ENCODE measurements at regions of chr3 and their contacts with region 1.

Region 1: GRCh38 chr3:134308350-134308891 is 57.8 kb upstream of the RYK start:
- DNase-seq: peak in 1 of 2 experiments; percentile 95
- H3K4me3 ChIP-seq: no peak overlapping the region
- H3K27ac ChIP-seq: peak overlapping the region; percentile 70; the same call in 1 of the 2 replicates
- H3K4me1 ChIP-seq: peaks cover 5 to 16% (median 8%) of the 10 kb centered on the region in 4 experiments
- H3K27me3 ChIP-seq: peaks cover 0 to 16% (median 9%) of the 10 kb centered on the region in 4 experiments; a peak in 5 of 7 replicates
- CTCF ChIP-seq: peak; percentile 86 to 99 (median 97)
- EP300 ChIP-seq: no peak
- POLR2A ChIP-seq: no peak
- RAD21 ChIP-seq: peak; percentile 99 to 100

Region 2: DNA sequence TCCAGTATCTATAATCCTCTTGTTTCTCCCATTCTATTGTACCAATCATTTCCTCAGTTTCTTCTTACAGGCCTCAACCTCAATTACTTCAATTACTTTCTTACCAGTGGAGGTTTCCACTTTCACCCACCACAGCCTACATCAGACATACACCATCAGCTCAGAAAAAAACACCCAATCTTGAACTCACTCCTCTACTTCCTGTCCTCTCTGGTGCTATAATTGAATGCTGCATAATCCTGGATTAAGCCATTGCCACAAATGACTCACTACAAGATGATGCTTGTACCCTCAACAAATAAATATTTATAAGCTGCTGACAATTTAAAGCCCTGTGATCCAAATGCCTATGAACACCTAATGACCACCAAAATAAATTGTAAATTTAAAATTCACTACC is 76.3 kb before region 1 on chr3:
- CTCF ChIA-PET with region 1: no interaction called
- POLR2A ChIA-PET with region 1: no interaction called
- DNase-seq: no peak
- H3K4me3 ChIP-seq: no peak overlapping the region
- H3K27ac ChIP-seq: no peak overlapping the region
- H3K4me1 ChIP-seq: peaks cover 0 to 3% (median 0%) of the 10 kb centered on the region in 4 experiments; a peak in 1 of 7 replicates
- H3K27me3 ChIP-seq: no peaks in the 10 kb centered on the region
- CTCF ChIP-seq: no peak
- EP300 ChIP-seq: no peak
- POLR2A ChIP-seq: no peak
- RAD21 ChIP-seq: no peak

Region 3: GRCh38 chr3:134326760-134327593 is 18.6 kb after region 1 on chr3:
- CTCF ChIA-PET with region 1: interaction called, 31 read pairs
- POLR2A ChIA-PET with region 1: interaction called, 100 read pairs
- DNase-seq: no peak
- H3K4me3 ChIP-seq: no peak overlapping the region; a peak in 1 of 8 replicates
- H3K27ac ChIP-seq: peak overlapping the region; percentile 62; the same call in 1 of the 2 replicates
- H3K4me1 ChIP-seq: peaks cover 9 to 29% (median 21%) of the 10 kb centered on the region in 4 experiments
- H3K27me3 ChIP-seq: no peaks in the 10 kb centered on the region
- CTCF ChIP-seq: no peak
- EP300 ChIP-seq: peak in 1 of 2 experiments; percentile 70; a peak in 1 of 3 replicates
- POLR2A ChIP-seq: peak in 1 of 2 experiments; percentile 26; a peak in 1 of 3 replicates
- RAD21 ChIP-seq: no peak

Region 4: GRCh38 chr3:134348524-134348923 is 40.1 kb after region 1 on chr3:
- CTCF ChIA-PET with region 1: interaction called, 24 read pairs
- POLR2A ChIA-PET with region 1: interaction called, 804 read pairs
- DNase-seq: no peak
- H3K4me3 ChIP-seq: no peak overlapping the region
- H3K27ac ChIP-seq: no peak overlapping the region
- H3K4me1 ChIP-seq: peaks cover 0 to 5% (median 2%) of the 10 kb centered on the region in 4 experiments; a peak in 2 of 7 replicates
- H3K27me3 ChIP-seq: no peaks in the 10 kb centered on the region
- CTCF ChIP-seq: no peak
- EP300 ChIP-seq: no peak
- POLR2A ChIP-seq: no peak
- RAD21 ChIP-seq: no peak

Region 5: DNA sequence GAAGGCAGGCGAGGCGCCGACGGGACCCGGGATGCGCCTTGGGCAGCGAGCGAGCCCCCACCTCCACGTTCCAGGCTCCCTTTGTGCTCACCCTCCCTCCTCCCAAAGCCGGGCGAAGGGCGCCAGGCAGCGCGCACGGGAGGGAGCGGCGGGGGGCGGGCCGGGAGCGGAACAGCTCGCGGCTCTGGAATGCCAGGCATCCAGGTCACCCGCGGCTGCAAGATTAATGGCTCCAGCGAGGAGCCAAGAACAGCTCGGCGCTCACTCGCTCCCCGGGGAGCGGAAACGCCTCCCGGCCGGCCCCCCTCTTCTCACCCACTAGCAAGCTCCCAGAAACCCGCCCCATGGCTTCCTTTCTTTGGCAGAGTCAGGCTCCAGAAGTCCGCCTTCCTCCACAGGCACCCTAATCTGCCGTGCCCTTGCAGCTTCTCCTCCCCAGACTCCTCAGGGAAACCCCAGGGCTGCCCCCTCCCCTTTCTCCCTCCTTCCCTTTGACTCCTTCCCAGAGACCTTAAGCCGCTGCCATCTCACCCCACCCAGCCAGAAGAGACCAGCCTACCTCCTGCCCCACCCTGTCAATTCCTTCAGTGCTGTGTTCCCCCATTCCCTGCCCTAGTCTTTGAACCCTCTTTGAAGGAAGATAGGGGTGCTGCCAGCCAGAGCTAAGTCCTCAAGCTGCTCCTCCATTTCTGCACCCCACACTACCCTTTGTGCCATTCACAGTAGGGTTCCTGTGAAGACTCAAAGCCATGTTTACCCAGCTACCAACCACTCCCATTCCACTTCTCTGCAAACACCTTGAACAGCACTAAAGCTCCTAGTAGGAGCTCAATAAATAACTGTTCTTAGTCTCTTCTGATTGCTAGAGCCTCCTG is 55.9 kb after region 1 on chr3:
- CTCF ChIA-PET with region 1: interaction called, 70 read pairs
- POLR2A ChIA-PET with region 1: interaction called, 804 read pairs
- DNase-seq: peak; percentile 88 to 92
- H3K4me3 ChIP-seq: peak overlapping the region in 3 of 4 experiments; percentile 1 to 44 (median 42); a peak in 5 of 8 replicates
- H3K27ac ChIP-seq: peak overlapping the region; percentile 77
- H3K4me1 ChIP-seq: peaks cover 18 to 29% (median 26%) of the 10 kb centered on the region in 4 experiments
- H3K27me3 ChIP-seq: no peaks in the 10 kb centered on the region; a peak in 1 of 7 replicates
- CTCF ChIP-seq: no peak
- EP300 ChIP-seq: peak; percentile 83 to 88; a peak in 2 of 3 replicates
- POLR2A ChIP-seq: peak in 1 of 2 experiments; percentile 83; a peak in 2 of 3 replicates
- RAD21 ChIP-seq: no peak; a peak in 1 of 4 replicates

Region 6: DNA sequence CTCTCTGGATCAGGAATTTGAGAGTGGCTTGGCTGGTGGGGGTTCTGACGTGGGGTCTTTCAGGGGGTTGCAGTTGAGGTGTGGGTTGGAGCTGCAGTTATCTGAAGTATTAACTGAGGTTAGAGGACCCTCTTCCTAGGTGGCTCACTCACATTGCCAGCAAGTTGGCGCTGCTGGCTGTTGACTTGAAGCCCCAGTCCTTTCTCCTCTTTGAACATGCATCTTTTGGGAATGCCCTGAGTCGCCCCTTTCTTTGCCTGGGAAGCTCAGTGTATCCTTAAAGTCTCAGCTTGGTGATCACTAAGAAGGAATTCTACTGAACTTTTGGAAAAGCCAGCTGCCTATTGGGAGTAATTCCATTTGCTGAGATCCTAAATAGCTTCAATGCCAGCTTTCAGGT is 78.9 kb after region 1 on chr3:
- CTCF ChIA-PET with region 1: interaction called, 13 read pairs
- POLR2A ChIA-PET with region 1: interaction called, 5 read pairs
- DNase-seq: no peak
- H3K4me3 ChIP-seq: no peak overlapping the region
- H3K27ac ChIP-seq: no peak overlapping the region
- H3K4me1 ChIP-seq: peaks cover 0 to 6% (median 0%) of the 10 kb centered on the region in 4 experiments; a peak in 2 of 7 replicates
- H3K27me3 ChIP-seq: 0 out of 7 replicates have a peak, but pooled peaks cover 0 to under 1% (median 0%) of the 10 kb centered on the region in 4 experiments
- CTCF ChIP-seq: no peak
- EP300 ChIP-seq: no peak
- POLR2A ChIP-seq: no peak
- RAD21 ChIP-seq: no peak

Region 7: DNA sequence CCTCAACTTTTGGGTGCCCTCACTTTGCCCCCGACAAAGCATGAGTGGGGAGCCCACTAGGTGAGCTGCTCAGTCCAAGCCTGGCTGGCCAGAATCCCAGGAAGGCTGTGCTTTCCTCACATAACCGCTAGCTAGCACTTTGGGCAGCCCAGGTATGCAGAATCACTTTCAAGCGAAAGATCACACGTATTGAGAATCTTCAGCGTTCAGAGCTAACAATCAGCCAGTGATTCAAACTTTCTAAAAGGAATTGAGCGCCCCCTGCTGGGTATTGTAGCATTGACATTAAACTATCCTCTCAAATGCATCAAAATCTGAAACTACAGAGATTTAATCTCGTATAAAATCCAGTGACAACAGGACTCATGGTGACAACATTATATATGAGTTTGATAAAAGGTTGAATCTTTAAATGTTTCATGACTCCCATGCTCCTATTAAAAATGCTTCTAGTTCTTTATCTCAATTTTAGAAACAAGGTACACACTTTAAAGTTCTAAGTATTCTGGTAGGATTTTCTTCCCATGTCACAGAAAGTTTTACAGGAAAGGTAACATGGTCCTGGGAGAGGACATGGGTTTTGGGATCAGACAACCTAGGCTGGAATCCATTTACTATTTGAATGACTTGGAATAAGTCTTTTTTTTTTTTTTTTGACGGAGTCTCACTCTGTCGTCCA is 165.6 kb after region 1 on chr3:
- CTCF ChIA-PET with region 1: interaction called, 138 read pairs
- POLR2A ChIA-PET with region 1: interaction called, 15 read pairs
- DNase-seq: peak in 1 of 2 experiments; percentile 88
- H3K4me3 ChIP-seq: no peak overlapping the region
- H3K27ac ChIP-seq: no peak overlapping the region
- H3K4me1 ChIP-seq: peaks cover 0 to 3% (median 1%) of the 10 kb centered on the region in 4 experiments; a peak in 3 of 7 replicates
- H3K27me3 ChIP-seq: no peaks in the 10 kb centered on the region; a peak in 1 of 7 replicates
- CTCF ChIP-seq: peak in 2 of 3 experiments; percentile 55 to 72; a peak in 3 of 4 replicates
- EP300 ChIP-seq: no peak
- POLR2A ChIP-seq: no peak
- RAD21 ChIP-seq: peak; percentile 85 to 89